H1 (cell line): ENCODE measurements at regions of chr19 and their contacts with region 1.

Region 1: GRCh38 chr19:45643024-45643926 is 4.1 kb upstream of the EML2 start:
- DNase-seq: peak in 1 of 2 experiments; percentile 99
- H3K4me3 ChIP-seq: peak overlapping the region; percentile 34 to 89 (median 70)
- H3K27ac ChIP-seq: no peak overlapping the region
- H3K4me1 ChIP-seq: peaks cover 6 to 30% (median 17%) of the 10 kb centered on the region in 4 experiments
- H3K27me3 ChIP-seq: peaks cover 0 to 6% (median 2%) of the 10 kb centered on the region in 4 experiments; a peak in 4 of 7 replicates
- CTCF ChIP-seq: peak; percentile 97 to 99 (median 98)
- EP300 ChIP-seq: no peak
- POLR2A ChIP-seq: peak in 1 of 2 experiments; percentile 31; a peak in 1 of 3 replicates
- RAD21 ChIP-seq: peak; percentile 96 to 98

Region 2: GRCh38 chr19:45496349-45496953 is 146.8 kb before region 1 on chr19:
- CTCF ChIA-PET with region 1: interaction called, 11 read pairs
- POLR2A ChIA-PET with region 1: interaction called, 6 read pairs
- DNase-seq: peak in 1 of 2 experiments; percentile 91
- H3K4me3 ChIP-seq: peak overlapping the region; percentile 53 to 83 (median 70)
- H3K27ac ChIP-seq: no peak overlapping the region
- H3K4me1 ChIP-seq: peaks cover 5 to 17% (median 15%) of the 10 kb centered on the region in 4 experiments; a peak in 6 of 7 replicates
- H3K27me3 ChIP-seq: peaks cover 0 to 10% (median 4%) of the 10 kb centered on the region in 4 experiments; a peak in 3 of 7 replicates
- CTCF ChIP-seq: no peak
- EP300 ChIP-seq: no peak
- POLR2A ChIP-seq: no peak
- RAD21 ChIP-seq: no peak

Region 3: GRCh38 chr19:45547976-45548609 is 95.2 kb before region 1 on chr19:
- CTCF ChIA-PET with region 1: interaction called, 40 read pairs
- POLR2A ChIA-PET with region 1: interaction called, 5 read pairs
- DNase-seq: no peak
- H3K4me3 ChIP-seq: no peak overlapping the region
- H3K27ac ChIP-seq: no peak overlapping the region
- H3K4me1 ChIP-seq: peaks cover 0 to 3% (median 0%) of the 10 kb centered on the region in 4 experiments; a peak in 2 of 7 replicates
- H3K27me3 ChIP-seq: no peaks in the 10 kb centered on the region
- CTCF ChIP-seq: no peak
- EP300 ChIP-seq: no peak
- POLR2A ChIP-seq: no peak
- RAD21 ChIP-seq: no peak

Region 4: GRCh38 chr19:45591004-45591637 is 52.2 kb before region 1 on chr19:
- CTCF ChIA-PET with region 1: interaction called, 44 read pairs
- POLR2A ChIA-PET with region 1: interaction called, 4 read pairs
- DNase-seq: peak in 1 of 2 experiments; percentile 81
- H3K4me3 ChIP-seq: no peak overlapping the region
- H3K27ac ChIP-seq: no peak overlapping the region
- H3K4me1 ChIP-seq: 0 out of 7 replicates have a peak, but pooled peaks cover 0 to 2% (median 0%) of the 10 kb centered on the region in 4 experiments
- H3K27me3 ChIP-seq: peaks cover 0 to 21% (median 16%) of the 10 kb centered on the region in 4 experiments; a peak in 6 of 7 replicates
- CTCF ChIP-seq: peak; percentile 78 to 84 (median 78)
- EP300 ChIP-seq: no peak
- POLR2A ChIP-seq: no peak
- RAD21 ChIP-seq: peak; percentile 80 to 83

Region 5: DNA sequence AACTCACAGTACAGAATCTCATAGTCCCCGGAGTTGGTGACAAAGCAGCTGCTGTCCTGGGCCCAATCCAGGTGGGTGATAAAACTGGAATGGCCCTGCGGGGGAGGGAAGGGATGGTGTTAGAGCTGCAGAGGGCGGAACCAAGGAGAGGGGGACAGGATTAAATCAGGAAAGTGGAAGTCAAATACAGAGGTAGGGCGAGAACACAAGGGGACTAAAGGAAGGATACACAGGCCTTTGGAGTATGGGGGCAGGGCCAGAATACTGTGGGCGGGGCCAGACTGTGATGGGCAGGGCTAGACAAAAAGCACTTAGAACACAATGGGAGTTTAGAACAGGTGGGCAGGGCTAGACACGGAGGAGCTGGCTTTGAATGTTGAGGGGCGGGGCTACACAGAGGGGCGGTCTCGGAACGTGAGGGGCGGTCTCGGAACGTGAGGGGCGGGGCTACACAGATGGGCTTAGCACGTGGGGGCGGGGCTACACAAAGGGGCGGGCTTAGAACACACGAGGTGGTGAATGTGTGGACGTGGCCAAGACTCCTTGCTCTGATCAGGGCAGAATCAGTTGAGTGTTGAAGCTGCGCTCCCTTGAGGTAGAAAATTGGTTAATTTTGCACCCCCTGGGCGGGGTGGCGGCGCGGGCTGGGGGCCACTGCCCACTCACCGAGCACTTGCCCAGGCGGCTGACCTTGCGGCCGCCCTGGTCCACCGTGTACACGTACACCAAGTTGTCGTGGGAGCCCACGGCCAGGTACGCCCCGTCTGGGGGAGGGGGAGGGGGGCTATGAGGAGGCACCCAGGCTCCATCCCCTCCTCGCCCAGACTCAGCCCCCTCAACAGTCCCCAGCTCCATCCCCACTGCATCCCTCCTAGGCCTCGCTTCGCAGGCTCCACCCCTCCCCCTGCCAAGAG is 27.2 kb before region 1 on chr19:
- CTCF ChIA-PET with region 1: interaction called, 135 read pairs
- POLR2A ChIA-PET with region 1: interaction called, 33 read pairs
- DNase-seq: peak; percentile 98 to 99
- H3K4me3 ChIP-seq: peak overlapping the region; percentile 80 to 89 (median 86)
- H3K27ac ChIP-seq: peak overlapping the region; percentile 86
- H3K4me1 ChIP-seq: peaks cover 0 to 6% (median 2%) of the 10 kb centered on the region in 4 experiments; a peak in 5 of 7 replicates
- H3K27me3 ChIP-seq: no peaks in the 10 kb centered on the region
- CTCF ChIP-seq: no peak
- EP300 ChIP-seq: no peak
- POLR2A ChIP-seq: peak; percentile 69 to 92
- RAD21 ChIP-seq: no peak

Region 6: GRCh38 chr19:45663800-45664199 is 20.5 kb after region 1 on chr19:
- CTCF ChIA-PET with region 1: interaction called, 14 read pairs
- POLR2A ChIA-PET with region 1: interaction called, 5 read pairs
- DNase-seq: no peak
- H3K4me3 ChIP-seq: no peak overlapping the region
- H3K27ac ChIP-seq: no peak overlapping the region
- H3K4me1 ChIP-seq: peaks cover 7 to 11% (median 10%) of the 10 kb centered on the region in 4 experiments
- H3K27me3 ChIP-seq: peaks cover 6 to 9% (median 8%) of the 10 kb centered on the region in 4 experiments
- CTCF ChIP-seq: no peak
- EP300 ChIP-seq: no peak
- POLR2A ChIP-seq: no peak
- RAD21 ChIP-seq: no peak